ENCODE measurements at regions of chr10 and their contacts with region 1.

Region 1: GRCh38 chr10:133453516-133454203 is at the start of gene SCART1:
- DNase-seq: peak; percentile 72
- total RNA-seq, gene SCART1: 1.0 TPM

Region 2: GRCh38 chr10:133394064-133394663 is 59.5 kb before region 1 on chr10 and contains the start of gene MTG1:
- intact Hi-C with region 1: no loop called
- DNase-seq: peak; percentile 96
- total RNA-seq, gene MTG1: 21.6 TPM

Region 3: GRCh38 chr10:133509700-133510099 is 56.0 kb after region 1 on chr10:
- intact Hi-C with region 1: loop called (anchors 10 kb)
- DNase-seq: no peak

Region 4: DNA sequence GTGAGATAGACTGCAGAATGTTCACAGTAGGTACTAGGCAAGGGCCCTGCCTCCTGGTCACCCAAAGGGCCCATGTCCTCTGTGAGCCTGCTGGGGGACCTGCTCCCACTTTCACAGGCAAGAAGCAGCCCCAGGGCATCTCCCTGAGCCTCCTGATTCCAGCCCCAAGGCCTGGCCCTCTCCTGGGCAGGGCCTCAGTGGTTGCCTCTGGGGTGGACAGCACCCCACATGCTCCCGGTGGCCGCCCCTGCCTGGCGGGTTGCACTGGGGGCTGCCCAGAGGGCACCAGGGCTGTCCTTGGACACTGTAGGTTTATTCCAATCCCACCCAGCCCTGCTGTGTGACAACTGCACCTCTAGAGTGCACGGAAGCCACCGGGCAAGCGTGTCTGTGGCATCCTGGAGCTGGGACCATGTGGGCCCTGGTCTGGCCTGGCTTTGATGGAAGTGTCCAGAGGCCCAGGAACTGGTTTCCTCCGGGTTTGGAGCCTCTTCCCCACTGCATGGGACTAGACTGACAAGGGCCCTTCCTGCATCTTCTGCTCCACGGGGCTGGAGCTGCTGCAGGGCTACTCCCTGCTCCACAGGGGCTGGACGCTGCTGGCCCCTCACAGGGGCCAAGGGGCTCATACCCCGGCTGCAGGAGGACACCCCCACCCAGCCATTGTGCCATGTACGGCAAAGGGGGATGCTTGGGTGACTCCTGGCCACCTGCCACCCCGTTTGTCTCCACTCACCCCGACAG is 136.7 kb after region 1 on chr10:
- intact Hi-C with region 1: no loop called
- DNase-seq: no peak